Left cardiac atrium (tissue), 4 donors: ENCODE measurements at regions of chr11 and their contacts with region 1.

Region 1: DNA sequence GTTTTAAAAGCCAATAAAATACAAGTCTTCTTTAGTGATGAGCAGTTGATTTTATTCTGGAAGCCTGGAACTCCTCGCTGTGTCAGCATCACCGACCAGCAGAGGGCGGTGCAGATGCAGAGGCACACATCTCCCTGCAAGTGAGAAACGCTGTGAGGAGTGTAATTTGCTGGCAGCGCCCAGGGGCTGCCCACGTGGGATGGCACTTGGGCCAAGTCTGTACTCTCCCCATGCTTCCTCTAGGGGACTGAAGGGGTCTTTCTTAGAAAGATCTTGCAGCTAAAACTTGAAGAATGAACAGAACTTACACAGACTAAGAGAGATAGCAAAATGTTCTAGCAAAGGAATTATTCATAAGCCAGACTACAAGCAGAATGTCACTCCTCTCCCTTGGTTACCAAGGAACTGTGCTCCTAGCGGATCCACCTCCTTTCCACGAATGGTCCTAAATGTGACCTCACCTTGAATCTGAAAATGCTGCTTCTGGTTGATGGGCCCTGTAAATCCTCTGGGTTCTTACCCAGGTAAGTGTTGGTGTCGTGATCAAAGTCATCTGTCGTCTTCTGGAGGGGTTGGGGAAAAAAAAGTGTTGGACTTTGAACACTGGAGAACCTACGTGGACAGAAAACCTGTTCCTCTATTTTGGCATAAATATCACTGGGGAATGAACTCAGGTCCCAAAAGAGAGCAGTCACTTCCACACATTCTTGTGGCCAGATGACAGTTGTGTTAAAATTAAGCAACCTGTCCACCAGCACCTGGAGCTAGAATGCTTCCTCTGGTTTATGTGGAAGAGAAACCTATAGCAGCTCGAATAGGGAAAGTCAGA is 31.8 kb downstream of the CNTF start:
- DNase-seq: peak; percentile 86
- ATAC-seq: peak; percentile 95 to 96

Region 2: DNA sequence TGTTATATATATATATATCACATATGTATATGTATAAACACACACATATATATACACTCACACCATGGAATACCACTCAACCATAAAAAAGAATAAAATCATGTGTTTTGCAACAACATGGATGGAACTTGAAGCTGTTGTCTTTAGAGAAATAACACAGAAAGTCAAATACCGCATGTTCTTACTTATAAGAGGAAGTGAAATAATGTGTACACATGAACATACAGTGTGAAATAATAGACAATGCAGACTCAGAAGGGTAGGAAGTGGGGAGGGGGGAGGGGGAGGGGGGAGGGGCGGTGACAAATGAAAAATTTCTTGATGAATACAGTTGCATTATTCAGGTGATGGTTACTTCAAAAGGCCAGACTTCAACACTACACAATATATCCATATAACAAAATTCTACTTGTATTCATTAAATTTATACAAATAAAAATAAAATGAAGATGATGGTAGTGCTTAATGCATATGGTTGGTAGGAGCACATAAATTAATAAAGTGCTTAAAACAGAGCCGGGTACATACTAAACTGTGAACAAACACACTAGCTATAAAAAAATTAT is 220.6 kb before region 1 on chr11:
- intact Hi-C with region 1: no loop called
- DNase-seq: no peak
- ATAC-seq: no peak

Region 3: GRCh38 chr11:58788355-58789023 is 134.2 kb after region 1 on chr11:
- intact Hi-C with region 1: loop called in 1 of 2 experiments (anchors 5 kb)
- DNase-seq: no peak
- ATAC-seq: peak in 1 of 2 donors; percentile 76